PC-9 (cell line): ENCODE measurements at regions of chr7 and their contacts with region 1.

Region 1: DNA sequence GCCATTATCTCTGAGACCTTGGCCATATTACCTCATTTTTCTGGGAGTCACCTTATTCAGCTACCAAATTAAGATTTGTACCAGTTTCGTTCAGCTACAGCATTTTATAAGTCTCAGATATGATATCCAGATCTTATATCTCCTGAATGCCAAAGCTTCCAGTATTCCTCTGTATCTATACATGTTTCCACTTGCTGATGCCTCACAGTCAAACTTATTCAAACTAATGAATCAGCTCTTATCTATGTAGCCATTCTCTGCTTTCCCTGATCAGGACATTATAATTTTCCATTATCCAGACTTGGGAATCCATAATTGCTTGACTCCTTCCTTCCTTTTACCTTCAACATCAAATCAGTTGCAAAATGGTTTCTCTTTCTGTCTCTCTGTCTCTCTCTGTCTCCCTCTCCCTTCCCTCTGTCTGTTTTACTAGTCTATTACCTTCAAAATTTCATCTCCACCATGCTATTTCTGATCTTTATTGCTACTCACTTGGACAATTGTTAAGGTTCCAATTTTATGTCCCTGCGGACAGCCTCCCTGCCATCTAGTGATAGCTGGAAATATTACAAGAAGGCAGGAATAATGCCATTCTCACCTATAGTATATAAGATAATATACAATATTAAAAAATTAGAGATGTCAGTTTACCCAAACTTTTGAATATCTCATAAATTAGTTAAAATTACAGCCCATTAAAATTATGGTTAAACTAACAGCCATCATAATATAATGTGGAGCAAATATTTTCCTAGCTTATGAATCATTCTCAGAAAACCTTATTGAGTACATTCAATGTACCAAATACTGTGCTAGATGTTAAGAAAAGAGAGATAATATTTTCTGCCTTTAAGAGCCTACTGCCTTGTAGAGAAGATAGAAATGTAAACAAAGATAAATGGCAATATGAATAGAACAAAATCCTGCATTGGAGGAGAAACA is 89.8 kb downstream of the PCLO start:
- DNase-seq: no peak
- H3K4me3 ChIP-seq: no peak overlapping the region
- H3K27ac ChIP-seq: no peak overlapping the region
- H3K4me1 ChIP-seq: no peaks in the 10 kb centered on the region
- H3K27me3 ChIP-seq: no peaks in the 10 kb centered on the region
- CTCF ChIP-seq: peak; percentile 39; the same call in 1 of the 2 replicates

Region 2: DNA sequence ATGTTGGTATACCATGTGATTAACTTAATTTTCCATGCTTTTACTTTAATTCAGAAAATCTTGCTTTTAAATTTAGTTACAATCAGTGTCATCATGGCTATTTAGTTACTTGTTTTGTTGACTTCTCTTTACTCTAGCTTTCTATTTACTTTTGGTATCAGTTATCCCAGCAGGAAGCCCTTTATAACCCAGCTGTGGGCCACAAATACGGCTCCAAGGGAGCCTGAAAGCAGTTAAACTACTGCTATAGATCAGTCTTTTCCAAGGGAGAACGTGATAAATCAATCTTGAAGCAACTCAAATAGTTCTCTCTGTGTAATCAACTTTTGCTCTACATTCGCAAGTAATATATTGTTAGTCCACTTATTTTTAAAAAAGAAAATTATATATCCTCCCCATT is 916.7 kb before region 1 on chr7:
- CTCF ChIA-PET with region 1: interaction called, 10 read pairs
- POLR2A ChIA-PET with region 1: no interaction called
- intact Hi-C with region 1: no loop called
- DNase-seq: no peak
- H3K4me3 ChIP-seq: no peak overlapping the region
- H3K27ac ChIP-seq: no peak overlapping the region
- H3K4me1 ChIP-seq: no peaks in the 10 kb centered on the region
- H3K27me3 ChIP-seq: no peaks in the 10 kb centered on the region
- CTCF ChIP-seq: no peak

Region 3: DNA sequence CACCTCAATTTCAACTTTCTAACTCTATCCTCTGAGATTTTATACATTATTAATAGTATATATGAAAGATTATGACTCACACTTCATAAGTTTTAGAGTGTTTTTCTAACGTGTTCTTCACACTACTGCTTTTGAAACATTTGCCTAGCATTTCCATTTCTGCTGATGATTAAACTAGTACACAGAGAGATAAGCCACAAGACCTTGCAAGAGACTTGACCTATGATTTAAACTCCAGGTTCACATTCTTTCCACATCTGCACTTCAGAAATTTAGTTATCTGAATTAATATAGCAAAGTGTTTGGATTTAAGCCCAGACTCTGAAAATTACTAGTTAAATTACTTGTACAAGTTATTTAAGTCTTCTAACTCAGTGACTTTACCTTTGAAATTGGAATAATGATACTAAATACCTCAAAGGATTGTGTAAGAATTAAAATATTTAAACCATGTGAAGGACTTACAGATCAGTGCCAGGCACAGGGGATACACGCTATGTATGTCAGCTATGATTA is 23.3 kb after region 1 on chr7:
- CTCF ChIA-PET with region 1: no interaction called
- POLR2A ChIA-PET with region 1: no interaction called
- intact Hi-C with region 1: no loop called
- DNase-seq: no peak
- H3K4me3 ChIP-seq: no peak overlapping the region
- H3K27ac ChIP-seq: no peak overlapping the region
- H3K4me1 ChIP-seq: no peaks in the 10 kb centered on the region
- H3K27me3 ChIP-seq: no peaks in the 10 kb centered on the region
- CTCF ChIP-seq: no peak

Region 4: DNA sequence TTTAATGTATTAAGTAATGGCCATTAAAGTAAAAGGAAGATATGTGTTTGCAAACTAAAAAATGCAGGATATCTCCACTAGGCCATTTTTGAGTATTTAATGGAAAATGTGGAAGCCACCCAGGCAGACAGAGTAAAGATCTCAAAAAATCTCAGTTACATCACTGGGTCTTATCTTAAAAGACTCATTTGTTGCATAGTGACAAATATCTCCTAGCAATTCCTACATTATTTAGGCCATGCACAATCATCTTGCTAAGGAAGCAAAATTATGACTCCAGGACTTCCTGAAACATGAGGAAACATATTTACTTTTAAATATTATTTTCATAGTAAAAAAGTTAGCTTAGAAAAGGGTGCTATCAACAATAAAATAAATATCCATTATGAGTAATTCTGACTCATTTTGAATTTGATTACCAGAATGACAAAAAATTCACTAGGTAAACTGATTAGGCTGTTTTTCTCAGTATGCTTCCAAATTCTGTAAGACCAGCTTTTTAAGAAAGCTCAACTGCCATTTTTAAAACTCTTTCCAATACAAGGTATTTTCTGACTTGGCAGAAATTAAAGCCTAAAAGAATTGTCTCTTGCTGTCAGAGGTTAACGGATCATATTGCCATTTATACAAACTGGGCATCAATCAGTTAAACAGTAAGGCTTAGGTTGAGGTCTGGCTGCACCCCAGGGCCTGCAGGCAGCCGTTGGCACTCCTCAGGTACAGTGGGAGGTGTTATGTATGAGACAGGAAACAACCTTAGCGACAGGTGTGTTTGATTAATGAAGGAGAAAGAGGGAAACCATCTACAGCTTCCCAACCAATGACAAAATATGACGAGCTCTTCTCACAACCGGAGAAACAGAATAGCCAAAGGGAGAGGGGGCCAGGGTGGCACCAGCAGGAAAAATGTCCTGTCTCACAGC is 58.0 kb after region 1 on chr7:
- CTCF ChIA-PET with region 1: no interaction called
- POLR2A ChIA-PET with region 1: no interaction called
- intact Hi-C with region 1: no loop called
- DNase-seq: no peak
- H3K4me3 ChIP-seq: no peak overlapping the region
- H3K27ac ChIP-seq: no peak overlapping the region
- H3K4me1 ChIP-seq: no peaks in the 10 kb centered on the region
- H3K27me3 ChIP-seq: no peaks in the 10 kb centered on the region
- CTCF ChIP-seq: no peak

Region 5: DNA sequence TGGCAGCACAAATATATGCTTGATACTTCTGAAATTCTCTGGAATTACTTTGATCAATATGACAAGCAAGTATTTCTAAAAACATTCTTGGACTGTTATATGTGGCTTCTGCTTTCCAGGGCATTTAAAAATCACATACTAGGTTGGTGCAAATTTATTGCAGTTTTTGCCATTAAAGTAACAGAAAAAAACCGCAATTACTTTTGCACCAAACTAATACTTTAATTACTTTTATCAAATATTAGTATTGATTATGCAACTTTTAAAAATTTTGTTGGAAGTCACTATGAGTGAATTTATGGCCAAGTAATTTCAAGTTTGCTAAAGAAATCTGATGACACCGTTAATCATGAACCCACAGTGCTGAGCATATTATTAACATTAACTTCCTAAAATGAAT is 325.3 kb after region 1 on chr7:
- CTCF ChIA-PET with region 1: no interaction called
- POLR2A ChIA-PET with region 1: no interaction called
- intact Hi-C with region 1: no loop called
- DNase-seq: no peak
- H3K4me3 ChIP-seq: no peak overlapping the region
- H3K27ac ChIP-seq: no peak overlapping the region
- H3K4me1 ChIP-seq: no peaks in the 10 kb centered on the region
- H3K27me3 ChIP-seq: no peaks in the 10 kb centered on the region
- CTCF ChIP-seq: no peak